Activated naive CD4-positive, alpha-beta T cell treated with anti-CD3 and anti-CD28 coated beads for 36 hours (primary cell): ENCODE measurements at regions of chr22 and their contacts with region 1.

Region 1: GRCh38 chr22:18077639-18078328 is at the start of gene PEX26:
- DNase-seq: peak; percentile 97
- H3K4me3 Mint-ChIP-seq: peak within 1 kb of the TSS; percentile 99
- H3K27ac Mint-ChIP-seq: peak within 1 kb of the TSS; percentile 99
- H3K4me1 Mint-ChIP-seq: peaks cover 47% of the 10 kb centered on the region
- H3K27me3 Mint-ChIP-seq: no peaks in the 10 kb centered on the region
- total RNA-seq, gene PEX26: 47.6 to 48.2 TPM

Region 2: DNA sequence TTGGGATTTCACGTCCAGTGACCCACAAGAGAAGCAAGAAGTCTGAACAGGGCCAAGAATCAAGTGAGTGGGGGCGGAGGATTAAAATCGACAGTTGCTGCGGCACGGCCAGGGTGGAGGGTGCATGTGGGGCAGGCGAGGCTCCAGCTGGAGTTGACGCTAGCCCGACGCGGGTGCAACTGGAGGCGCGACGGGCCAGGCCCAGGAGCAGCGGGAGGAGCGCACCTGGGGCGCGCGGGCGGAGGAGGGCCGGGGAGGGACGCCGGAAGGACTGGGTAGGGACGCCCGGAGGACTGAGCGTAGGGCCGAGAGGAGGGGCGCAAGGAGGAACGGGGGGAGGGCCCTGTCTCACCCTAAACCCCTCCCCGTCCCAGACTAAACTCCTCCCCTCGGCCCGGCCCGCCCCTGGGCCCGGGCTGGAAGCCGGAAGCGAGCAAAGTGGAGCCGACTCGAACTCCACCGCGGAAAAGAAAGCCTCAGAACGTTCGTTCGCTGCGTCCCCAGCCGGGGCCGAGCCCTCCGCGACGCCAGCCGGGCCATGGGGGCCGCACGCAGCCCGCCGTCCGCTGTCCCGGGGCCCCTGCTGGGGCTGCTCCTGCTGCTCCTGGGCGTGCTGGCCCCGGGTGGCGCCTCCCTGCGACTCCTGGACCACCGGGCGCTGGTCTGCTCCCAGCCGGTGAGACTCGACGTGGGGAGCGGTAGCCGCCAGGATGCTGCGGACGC is 993.1 kb before region 1 on chr22 and contains the start of gene IL17RA:
- CTCF ChIA-PET with region 1: no interaction called
- intact Hi-C with region 1: loop called (anchors 5 kb)
- DNase-seq: peak; percentile 95
- H3K4me3 Mint-ChIP-seq: peak within 1 kb of the TSS; percentile 84
- H3K27ac Mint-ChIP-seq: peak within 1 kb of the TSS; percentile 85
- H3K4me1 Mint-ChIP-seq: peaks cover 42% of the 10 kb centered on the region
- H3K27me3 Mint-ChIP-seq: no peaks in the 10 kb centered on the region
- total RNA-seq, gene IL17RA: 10.2 to 10.7 TPM

Region 3: GRCh38 chr22:17706018-17706900 is 371.5 kb before region 1 on chr22:
- CTCF ChIA-PET with region 1: interaction called, 3 read pairs
- intact Hi-C with region 1: loop called (anchors 1 kb)
- DNase-seq: peak; percentile 67
- H3K4me3 Mint-ChIP-seq: peak overlapping the region; percentile 49
- H3K27ac Mint-ChIP-seq: peak overlapping the region; percentile 89
- H3K4me1 Mint-ChIP-seq: peaks cover 20% of the 10 kb centered on the region
- H3K27me3 Mint-ChIP-seq: no peaks in the 10 kb centered on the region

Region 4: GRCh38 chr22:17830043-17830961 is 247.5 kb before region 1 on chr22:
- CTCF ChIA-PET with region 1: interaction called, 96 read pairs
- intact Hi-C with region 1: loop called (anchors 1 kb)
- DNase-seq: peak; percentile 90
- H3K4me3 Mint-ChIP-seq: no peak overlapping the region
- H3K27ac Mint-ChIP-seq: no peak overlapping the region
- H3K4me1 Mint-ChIP-seq: peaks cover 3% of the 10 kb centered on the region
- H3K27me3 Mint-ChIP-seq: no peaks in the 10 kb centered on the region

Region 5: GRCh38 chr22:17903564-17904295 is 174.1 kb before region 1 on chr22:
- CTCF ChIA-PET with region 1: no interaction called
- intact Hi-C with region 1: no loop called
- DNase-seq: no peak
- H3K4me3 Mint-ChIP-seq: no peak overlapping the region
- H3K27ac Mint-ChIP-seq: no peak overlapping the region
- H3K4me1 Mint-ChIP-seq: no peaks in the 10 kb centered on the region
- H3K27me3 Mint-ChIP-seq: no peaks in the 10 kb centered on the region

Region 6: DNA sequence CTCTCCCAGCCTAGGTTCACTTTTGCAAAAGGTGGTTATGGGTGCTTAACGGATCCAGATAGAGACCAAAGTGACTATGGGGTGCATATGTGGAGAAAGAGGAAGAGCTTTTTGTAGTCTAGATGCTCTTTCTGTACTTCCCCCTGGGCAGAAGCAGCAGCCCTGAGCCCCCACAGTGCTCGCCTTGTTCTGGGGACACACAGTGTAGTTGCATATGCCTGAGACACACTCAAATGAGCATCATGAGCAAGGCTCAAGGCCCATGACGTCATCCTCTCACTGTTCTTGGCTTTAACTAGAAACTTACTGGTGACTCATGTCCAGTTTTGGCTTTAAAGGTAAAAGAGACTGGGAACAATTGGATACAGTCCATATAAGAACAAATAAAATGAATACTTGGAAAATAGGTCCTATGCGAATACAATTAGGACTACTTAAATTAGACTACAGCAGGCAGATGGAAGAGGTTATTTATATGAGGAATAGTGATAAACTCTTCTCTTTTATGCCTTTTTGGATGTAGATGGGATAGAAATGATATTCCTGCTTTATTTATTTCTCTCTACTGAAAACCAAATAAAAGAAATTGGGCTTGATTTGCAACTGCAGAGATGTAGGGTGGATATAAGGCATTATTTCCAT is 20.1 kb before region 1 on chr22:
- CTCF ChIA-PET with region 1: interaction called, 11 read pairs
- intact Hi-C with region 1: no loop called
- DNase-seq: no peak
- H3K4me3 Mint-ChIP-seq: no peak overlapping the region
- H3K27ac Mint-ChIP-seq: no peak overlapping the region
- H3K4me1 Mint-ChIP-seq: no peaks in the 10 kb centered on the region
- H3K27me3 Mint-ChIP-seq: no peaks in the 10 kb centered on the region

Region 7: DNA sequence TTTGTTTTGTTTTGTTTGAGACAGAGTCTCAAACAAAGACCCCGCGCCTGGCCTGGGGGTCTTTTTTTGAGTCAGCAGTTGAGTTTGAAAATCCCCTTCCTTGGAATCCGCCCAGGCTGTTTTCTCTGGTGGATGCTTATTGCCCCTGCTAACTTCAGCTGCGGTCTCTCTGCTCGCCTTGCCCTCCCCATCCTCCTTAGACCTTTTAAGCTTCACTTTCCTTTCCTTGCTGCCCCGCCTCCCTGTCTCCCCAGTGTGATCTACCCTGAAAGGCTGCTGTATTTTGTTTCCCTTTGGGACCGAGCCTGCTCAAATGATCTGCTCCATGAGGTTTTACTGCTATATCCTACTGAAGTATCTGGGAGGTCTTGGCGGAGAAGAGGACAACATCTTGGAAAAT is 74.7 kb after region 1 on chr22:
- CTCF ChIA-PET with region 1: interaction called, 17 read pairs
- intact Hi-C with region 1: loop called (anchors 2 kb)
- DNase-seq: peak; percentile 54
- H3K4me3 Mint-ChIP-seq: peak overlapping the region; percentile 54
- H3K27ac Mint-ChIP-seq: no peak overlapping the region
- H3K4me1 Mint-ChIP-seq: peaks cover 28% of the 10 kb centered on the region
- H3K27me3 Mint-ChIP-seq: no peaks in the 10 kb centered on the region